ENCODE measurements at regions of chr18 and their contacts with region 1.

Region 1: DNA sequence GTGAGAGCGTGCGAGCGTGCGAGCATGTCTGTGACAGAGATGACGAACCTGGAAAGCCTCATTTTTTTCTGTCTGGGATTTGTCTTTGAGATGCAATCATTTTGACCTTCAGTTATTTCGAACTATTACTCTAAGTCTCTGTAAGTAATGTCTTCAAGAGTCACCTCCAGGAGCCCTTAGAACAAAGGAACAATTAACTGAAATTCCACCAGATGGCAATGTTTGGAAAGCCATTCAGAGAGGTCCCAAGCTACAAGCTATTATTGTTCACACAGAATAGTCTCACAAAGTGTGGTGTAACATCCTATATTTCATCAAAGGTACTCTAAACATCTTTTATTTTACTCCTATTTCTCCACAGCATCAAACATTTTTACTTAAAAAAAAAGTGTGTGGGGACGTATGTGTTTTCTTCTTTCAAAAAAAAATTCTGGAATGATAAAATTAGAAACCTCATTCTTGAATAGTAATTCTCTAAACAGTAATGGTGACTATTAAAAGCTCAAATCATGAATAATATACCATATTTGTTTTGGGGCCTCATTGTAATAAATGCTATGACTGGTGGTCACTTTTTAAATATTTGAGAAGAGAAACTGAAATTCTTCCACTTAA is 35.1 kb upstream of the MAPRE2 start:
- DNase-seq: no peak
- H3K4me3 Mint-ChIP-seq: no peak overlapping the region
- H3K27ac Mint-ChIP-seq: no peak overlapping the region
- H3K4me1 Mint-ChIP-seq: no peaks in the 10 kb centered on the region
- H3K27me3 Mint-ChIP-seq: peaks cover 2% of the 10 kb centered on the region

Region 2: DNA sequence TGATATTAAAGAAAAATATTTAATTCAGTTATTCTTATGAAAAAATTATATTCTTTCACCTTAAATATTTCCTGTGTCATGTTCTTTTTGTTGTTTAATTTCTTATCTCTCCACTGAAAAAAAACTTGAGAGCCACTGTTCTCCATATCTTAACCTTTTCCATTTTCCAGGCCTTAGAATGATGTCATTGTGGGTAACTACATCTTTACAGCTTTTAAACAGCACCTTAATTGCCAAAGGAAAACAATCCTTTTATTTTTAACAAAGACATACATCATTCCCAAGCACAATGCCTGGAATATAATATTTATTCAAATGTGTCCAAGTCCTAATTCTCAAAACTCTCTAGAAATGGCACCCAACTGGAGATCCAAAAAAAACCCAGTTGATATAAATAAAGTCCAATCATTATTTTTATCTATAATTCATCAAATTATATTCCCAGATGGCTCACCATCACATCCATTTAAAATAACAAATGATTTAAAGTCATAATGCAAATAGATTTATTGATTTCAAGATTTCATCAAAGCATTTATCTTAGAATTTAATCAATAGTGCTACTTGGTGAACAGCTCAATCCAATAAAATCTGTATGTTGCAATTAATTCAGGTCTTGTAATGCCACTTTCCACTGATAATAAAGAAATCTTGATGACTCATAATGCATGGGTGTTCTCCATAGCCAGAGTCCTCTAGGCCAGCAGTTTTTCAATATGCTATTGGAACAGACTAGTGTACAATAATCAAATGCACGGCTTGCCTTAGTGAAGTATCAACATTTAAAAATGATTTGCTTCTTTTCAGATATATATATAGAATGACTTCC is 72.0 kb before region 1 on chr18:
- intact Hi-C with region 1: no loop called
- DNase-seq: no peak
- H3K4me3 Mint-ChIP-seq: no peak overlapping the region
- H3K27ac Mint-ChIP-seq: no peak overlapping the region
- H3K4me1 Mint-ChIP-seq: no peaks in the 10 kb centered on the region
- H3K27me3 Mint-ChIP-seq: no peaks in the 10 kb centered on the region

Region 3: DNA sequence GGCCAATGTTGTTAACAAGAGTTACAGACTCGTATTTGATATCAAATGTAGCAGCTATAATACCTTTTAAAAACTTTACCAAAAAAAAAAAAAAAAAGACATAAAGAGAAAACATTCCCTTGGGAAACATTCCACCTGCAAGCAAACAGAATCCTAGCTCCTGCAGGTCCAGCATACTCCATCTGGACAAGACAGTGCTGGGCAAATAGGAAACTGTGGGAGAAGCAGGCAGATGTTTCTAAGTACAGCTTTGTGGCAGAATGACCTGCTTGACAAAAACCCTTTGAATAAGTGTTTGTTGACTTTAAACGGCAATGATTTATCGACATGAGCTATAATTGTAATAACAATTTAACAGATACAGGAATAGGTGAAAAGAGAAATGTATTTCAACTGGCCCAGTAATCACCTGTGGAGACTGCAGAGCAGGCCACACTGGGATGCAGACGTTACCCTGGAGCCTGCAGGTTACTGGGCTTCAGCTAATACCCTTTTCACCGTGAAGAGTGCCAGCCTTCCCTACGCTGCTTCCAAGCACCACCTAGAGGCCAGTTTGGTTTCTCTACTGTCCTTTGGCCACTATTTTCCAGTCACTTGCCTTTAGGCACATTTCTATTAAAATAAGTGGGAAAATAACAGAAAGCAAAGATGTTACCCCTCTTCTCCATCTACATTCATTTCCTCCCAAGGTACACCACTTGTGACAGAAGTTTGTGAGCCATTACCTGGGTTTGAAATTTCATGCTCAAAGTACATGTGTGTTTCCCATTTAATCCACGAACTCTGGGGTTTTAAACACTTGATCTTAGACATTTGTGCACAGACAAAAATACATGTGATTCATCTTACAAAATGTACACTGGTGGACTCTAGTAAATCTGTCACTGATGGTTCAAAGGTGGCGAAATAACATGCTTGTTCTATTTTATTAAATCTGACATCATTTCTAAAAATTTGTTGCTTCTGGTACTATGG is 137.8 kb after region 1 on chr18:
- intact Hi-C with region 1: loop called (anchors 1 kb)
- DNase-seq: no peak
- H3K4me3 Mint-ChIP-seq: no peak overlapping the region
- H3K27ac Mint-ChIP-seq: no peak overlapping the region
- H3K4me1 Mint-ChIP-seq: peaks cover 3% of the 10 kb centered on the region
- H3K27me3 Mint-ChIP-seq: no peaks in the 10 kb centered on the region

Region 4: GRCh38 chr18:35171315-35171987 is 165.4 kb after region 1 on chr18:
- intact Hi-C with region 1: no loop called
- DNase-seq: no peak
- H3K4me3 Mint-ChIP-seq: no peak overlapping the region
- H3K27ac Mint-ChIP-seq: peak overlapping the region; percentile 76
- H3K4me1 Mint-ChIP-seq: peaks cover 10% of the 10 kb centered on the region
- H3K27me3 Mint-ChIP-seq: peaks cover 2% of the 10 kb centered on the region

Region 5: GRCh38 chr18:35355140-35355618 is 349.1 kb after region 1 on chr18:
- intact Hi-C with region 1: loop called (anchors 1 kb)
- DNase-seq: peak; percentile 26
- H3K4me3 Mint-ChIP-seq: no peak overlapping the region
- H3K27ac Mint-ChIP-seq: no peak overlapping the region
- H3K4me1 Mint-ChIP-seq: peaks cover 4% of the 10 kb centered on the region
- H3K27me3 Mint-ChIP-seq: no peaks in the 10 kb centered on the region

Measured in activated T-helper 1 cell treated with anti-CD3 and anti-CD28 coated beads, Interleukin-12 subunit alpha, Interleukin-12 subunit beta, Interleukin-2, Interleukin-4 antibody, amounts not matched to agents 30 ng/mL and 10 ng/mL and 1 ng/mL, durations not matched to agents 14 hours and 24 hours and 36 hours (primary cell).